Kidney (tissue), 22 donors: ENCODE measurements at regions of chr12 and their contacts with region 1.

Region 1: GRCh38 chr12:22544038-22544979 is at the start of gene C2CD5:
- DNase-seq: peak; percentile 98 to 99 (median 98)
- H3K4me3 ChIP-seq: peak within 1 kb of the TSS; percentile 81 to 93 (median 92)
- H3K27ac ChIP-seq: peak within 1 kb of the TSS; percentile 84 to 97
- H3K4me1 ChIP-seq: peaks cover 0 to 16% (median 14%) of the 10 kb centered on the region in 3 donors
- H3K27me3 ChIP-seq: no peaks in the 10 kb centered on the region
- CTCF ChIP-seq: peak; percentile 22
- total RNA-seq, gene C2CD5: 48.4 TPM

Region 2: DNA sequence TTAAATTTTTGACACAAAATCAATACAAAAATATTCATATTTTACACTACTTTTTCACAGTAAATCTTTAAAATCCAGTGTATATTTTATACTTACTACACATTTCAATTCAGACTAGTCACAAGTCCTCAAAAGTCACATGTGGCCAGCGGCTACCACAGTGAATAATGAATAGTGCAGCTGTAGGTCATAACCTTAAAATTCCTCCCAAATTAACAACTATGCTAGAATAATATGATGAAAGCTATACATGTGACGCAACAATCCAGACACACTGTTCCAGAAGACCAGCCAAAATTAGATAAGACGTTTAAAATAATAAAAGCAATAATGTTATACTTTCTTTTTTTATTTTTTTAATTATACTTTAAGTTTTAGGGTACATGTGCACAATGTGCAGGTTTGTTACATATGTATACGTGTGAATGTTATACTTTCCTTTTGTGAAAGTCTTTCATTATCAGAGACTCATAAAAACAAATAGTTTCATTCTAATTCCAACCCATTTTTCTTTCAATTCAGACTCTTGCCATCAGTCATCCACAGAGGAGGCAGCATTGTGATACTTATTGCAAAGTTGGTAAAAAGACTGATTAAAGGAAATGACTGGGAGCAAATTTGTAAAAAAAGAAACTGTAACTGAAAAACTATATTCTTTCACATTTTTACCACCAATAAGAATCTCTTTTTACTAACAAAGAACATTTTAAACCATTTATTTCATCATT is 67.0 kb before region 1 on chr12:
- intact Hi-C with region 1: no loop called
- DNase-seq: no peak
- H3K4me3 ChIP-seq: no peak overlapping the region
- H3K27ac ChIP-seq: no peak overlapping the region
- H3K4me1 ChIP-seq: no peaks in the 10 kb centered on the region
- H3K27me3 ChIP-seq: no peaks in the 10 kb centered on the region
- CTCF ChIP-seq: no peak

Region 3: DNA sequence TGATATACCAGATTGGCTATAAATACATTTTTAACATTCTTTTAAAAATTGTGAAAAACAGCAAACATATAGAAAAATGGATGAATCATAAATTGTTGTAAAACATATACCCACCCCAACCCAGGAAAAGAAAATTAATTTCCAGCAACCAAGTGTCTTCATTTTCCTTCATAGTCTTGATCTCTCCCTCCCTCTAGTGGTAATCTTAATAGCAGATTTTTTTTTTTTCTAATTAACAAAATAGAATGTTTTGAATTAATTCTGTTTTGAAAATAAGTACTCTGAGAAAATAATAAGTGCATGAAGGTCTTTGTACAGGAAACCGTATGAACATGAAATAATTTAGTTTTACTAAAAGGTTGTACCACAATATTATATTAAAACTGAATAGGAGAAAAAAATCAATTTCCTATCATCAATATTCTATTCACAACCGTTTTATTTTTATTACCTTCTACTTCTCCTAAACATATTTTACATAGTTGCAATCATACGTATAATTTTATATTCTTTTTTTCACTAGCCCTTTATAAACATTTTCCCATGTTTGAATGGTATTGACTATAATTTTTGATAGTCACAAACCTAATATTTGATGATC is 87.7 kb after region 1 on chr12:
- intact Hi-C with region 1: loop called (anchors 5 kb)
- DNase-seq: peak in 1 of 5 donors; percentile 15
- H3K4me3 ChIP-seq: no peak overlapping the region
- H3K27ac ChIP-seq: no peak overlapping the region
- H3K4me1 ChIP-seq: peaks cover under 1 to 7% (median 3%) of the 10 kb centered on the region in 3 donors
- H3K27me3 ChIP-seq: no peaks in the 10 kb centered on the region
- CTCF ChIP-seq: peak; percentile 46